Endothelial cell of umbilical vein (primary cell): ENCODE measurements at regions of chr4 and their contacts with region 1.

Region 1: DNA sequence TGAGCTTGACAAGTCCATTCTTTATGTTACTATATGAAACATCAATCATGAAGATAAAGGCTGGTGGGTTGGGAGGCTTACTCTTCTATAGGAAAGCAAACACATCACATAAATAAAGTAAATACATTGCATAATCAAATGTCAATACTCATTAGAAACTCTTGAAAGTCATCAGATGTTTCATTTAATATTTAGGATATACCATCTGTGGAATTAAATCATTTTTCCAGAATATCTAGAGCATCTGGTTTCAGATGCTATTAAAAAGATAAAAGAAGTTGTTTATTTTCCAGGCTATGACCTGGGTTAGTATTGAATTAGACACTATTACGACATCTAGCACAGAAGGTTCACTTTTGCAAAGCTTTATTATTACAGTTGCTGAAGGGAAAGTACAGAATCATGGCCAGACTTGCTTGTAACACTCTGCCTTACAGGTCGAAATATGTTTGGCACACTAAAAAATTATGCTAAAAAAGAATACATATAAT is 72.6 kb downstream of the METTL14 start:
- DNase-seq: no peak
- H3K4me3 ChIP-seq: no peak overlapping the region
- H3K27ac ChIP-seq: no peak overlapping the region
- H3K4me1 ChIP-seq: peaks cover 15% of the 10 kb centered on the region
- H3K27me3 ChIP-seq: no peaks in the 10 kb centered on the region
- CTCF ChIP-seq: no peak
- POLR2A ChIP-seq: no peak

Region 2: DNA sequence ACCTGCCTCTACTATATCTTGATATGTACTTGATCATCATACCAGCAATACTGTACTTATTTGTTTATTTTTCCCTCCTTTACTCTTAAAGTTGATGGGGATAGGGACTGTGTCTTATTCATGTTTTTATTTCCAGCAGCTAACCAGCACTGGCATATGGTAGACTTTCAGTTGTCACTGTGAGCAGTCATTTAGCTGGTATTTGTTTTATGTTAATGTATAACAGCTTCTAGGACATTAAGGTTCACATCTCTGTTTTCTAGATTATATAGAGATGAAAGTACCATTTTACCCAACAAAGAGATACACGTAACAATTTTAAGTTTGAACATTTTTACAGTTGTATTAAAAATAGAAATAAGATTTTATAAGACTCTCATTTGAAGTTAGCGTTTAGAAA is 54.7 kb before region 1 on chr4:
- CTCF ChIA-PET with region 1: no interaction called
- POLR2A ChIA-PET with region 1: no interaction called
- dilution Hi-C with region 1: no loop called
- intact Hi-C with region 1: no loop called
- DNase-seq: no peak
- H3K4me3 ChIP-seq: no peak overlapping the region
- H3K27ac ChIP-seq: no peak overlapping the region
- H3K4me1 ChIP-seq: no peaks in the 10 kb centered on the region
- H3K27me3 ChIP-seq: no peaks in the 10 kb centered on the region
- CTCF ChIP-seq: no peak
- POLR2A ChIP-seq: no peak

Region 3: GRCh38 chr4:118734491-118735205 is 23.2 kb before region 1 on chr4:
- CTCF ChIA-PET with region 1: no interaction called
- POLR2A ChIA-PET with region 1: no interaction called
- dilution Hi-C with region 1: no loop called
- intact Hi-C with region 1: loop called (anchors 2 kb)
- DNase-seq: no peak
- H3K4me3 ChIP-seq: no peak overlapping the region
- H3K27ac ChIP-seq: no peak overlapping the region
- H3K4me1 ChIP-seq: peaks cover 2% of the 10 kb centered on the region
- H3K27me3 ChIP-seq: no peaks in the 10 kb centered on the region
- CTCF ChIP-seq: no peak
- POLR2A ChIP-seq: no peak